Left cardiac atrium (tissue), 4 donors: ENCODE measurements at regions of chr12 and their contacts with region 1.

Region 1: GRCh38 chr12:51269174-51270066 is 795 bp downstream of the SMAGP start:
- DNase-seq: peak; percentile 51
- ATAC-seq: peak; percentile 63 to 65

Region 2: DNA sequence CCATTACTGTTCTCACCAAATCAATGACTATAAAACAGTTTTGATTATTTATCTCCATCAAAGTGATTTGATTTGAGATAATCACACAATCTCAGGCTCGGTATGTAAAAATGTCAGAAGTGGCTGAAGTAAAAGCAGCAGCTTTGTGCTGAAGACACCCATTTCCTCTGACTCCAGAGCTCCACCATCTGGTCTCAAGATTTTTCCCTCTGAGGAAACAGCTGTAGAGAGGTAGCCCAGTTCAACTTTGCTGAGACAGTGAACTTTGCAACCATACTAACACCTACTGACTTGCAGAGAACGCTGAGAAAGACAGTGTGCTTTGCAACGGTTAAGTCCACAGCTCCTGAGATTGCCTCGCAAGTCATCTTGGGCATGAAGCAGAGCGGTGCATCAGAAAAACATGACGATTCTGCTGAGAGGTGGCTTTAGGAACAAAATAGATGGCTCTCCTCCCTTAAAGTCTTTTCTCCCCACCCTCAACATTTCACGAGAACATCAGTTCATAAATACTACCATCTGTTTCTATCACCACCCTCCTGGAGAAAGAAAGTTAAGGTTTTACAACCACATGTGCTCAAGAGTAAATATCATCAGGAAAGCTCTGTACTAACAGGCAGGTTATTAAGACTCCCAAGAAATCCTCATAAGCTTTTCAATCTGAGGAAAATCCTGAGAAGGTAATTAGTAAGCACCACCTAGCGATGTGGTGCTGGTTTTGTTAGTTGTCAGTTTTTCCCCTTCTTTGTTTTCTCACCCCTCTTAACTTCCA is 282.3 kb before region 1 on chr12:
- intact Hi-C with region 1: no loop called
- DNase-seq: no peak
- ATAC-seq: peak; percentile 65 to 76

Region 3: GRCh38 chr12:51225771-51226170 is 43.6 kb before region 1 on chr12:
- intact Hi-C with region 1: no loop called
- DNase-seq: no peak
- ATAC-seq: no peak

Region 4: DNA sequence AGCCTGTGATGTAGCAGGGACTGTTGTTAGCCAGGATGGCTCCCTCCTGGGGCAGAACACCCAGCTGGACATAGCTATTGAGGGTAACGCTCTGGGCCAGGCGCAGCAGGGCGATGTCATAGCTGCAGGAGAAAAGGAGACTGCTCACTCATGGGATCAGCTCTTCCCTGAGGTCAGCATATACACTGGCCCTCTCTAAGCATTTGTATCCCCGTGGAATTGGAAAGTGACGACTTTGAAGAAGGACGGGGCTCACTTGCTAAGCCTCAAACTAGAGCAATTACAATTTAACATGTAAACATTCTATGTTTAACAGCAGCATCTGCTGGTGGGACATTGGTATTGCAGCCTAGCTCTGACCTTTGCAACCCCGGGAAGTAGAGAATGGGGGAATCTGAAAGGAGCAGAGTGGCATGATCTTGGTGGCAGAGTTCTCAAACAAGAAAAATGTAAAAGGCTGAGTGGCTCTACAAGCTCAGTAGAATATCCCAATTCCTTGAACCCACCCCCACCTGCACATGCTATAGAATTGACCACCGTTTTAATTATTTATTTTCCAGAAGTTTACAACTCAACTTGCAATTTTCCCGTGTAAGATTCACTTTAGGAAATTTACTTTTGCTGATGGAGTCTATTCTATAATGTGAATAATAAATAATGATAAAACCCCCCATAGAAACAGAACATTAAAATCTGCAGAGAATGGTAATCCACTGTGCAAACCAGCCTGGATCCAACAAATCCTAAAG is 72.0 kb after region 1 on chr12:
- intact Hi-C with region 1: loop called in 1 of 2 experiments (anchors 1 kb)
- DNase-seq: peak; percentile 51
- ATAC-seq: peak; percentile 88 to 90